ENCODE measurements at regions of chr7 and their contacts with region 1.

Region 1: DNA sequence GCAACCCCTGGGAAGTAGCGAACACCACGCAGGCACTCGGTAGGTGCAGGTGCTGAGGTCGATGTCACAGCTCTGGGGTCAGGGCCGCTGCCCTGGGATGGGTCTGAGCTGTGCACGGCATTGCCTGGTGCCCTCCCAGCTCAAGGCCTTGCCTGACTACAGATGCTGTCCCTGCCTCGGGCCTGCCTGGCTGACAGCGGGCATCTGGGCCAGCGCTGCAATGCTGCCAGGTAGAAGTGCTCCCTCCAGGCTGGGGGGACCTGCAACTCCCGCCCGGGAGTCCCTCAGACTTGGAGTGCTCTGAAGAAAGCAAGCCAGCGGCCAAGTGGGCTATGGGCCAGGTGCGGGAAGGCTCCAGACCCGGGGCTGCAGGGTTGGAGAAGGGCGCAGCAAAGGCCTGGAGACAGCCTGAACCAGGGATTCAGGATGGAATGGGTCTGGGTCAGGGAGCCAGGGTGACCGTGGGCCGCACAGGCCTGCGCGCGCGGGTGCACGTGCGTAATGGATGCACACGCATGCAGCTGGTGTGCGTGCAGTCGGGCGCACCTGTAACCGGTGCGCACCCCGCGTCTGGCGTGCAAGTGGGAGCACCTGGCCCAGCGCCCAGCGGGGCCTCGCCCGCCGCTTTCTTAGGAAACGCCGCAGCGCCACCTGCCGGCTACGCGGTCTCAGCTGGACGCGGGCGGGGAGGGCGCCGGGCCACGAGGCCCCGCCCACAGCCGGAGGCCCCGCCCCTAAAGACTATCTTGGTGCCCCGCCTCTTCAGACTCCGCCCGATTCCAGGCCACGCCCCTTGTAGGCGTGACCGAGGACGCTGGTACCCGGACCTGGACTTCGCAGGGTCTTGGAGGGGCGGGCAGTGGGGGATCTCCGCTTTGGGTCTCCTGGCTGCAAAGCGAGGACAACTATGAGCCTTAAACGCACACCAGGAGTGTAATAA is 46.7 kb downstream of the MICALL2 start:
- DNase-seq: peak in 9 of 10 donors; percentile 48 to 90 (median 68)
- H3K4me3 ChIP-seq: peak overlapping the region in 24 of 59 donors; percentile 5 to 48 (median 24)
- H3K27ac ChIP-seq: peak overlapping the region in 1 of 59 donors; percentile 61
- H3K27me3 ChIP-seq: peaks cover 0 to 76% (median 34%) of the 10 kb centered on the region in 45 donors
- CTCF ChIP-seq: peak; percentile 40 to 91 (median 76)

Region 2: GRCh38 chr7:1225441-1226185 is 187.0 kb before region 1 on chr7:
- intact Hi-C with region 1: loop called (anchors 2 to 10 kb)
- DNase-seq: peak in 3 of 10 donors; percentile 31 to 70 (median 61)
- H3K4me3 ChIP-seq: no peak overlapping the region
- H3K27ac ChIP-seq: peak overlapping the region in 1 of 59 donors; percentile 80
- H3K27me3 ChIP-seq: peaks cover 22 to 100% (median 89%) of the 10 kb centered on the region in 45 donors
- CTCF ChIP-seq: peak in 55 of 56 donors; percentile 28 to 91 (median 77)

Measured in dorsolateral prefrontal cortex (tissue), 120 donors.